AG04450 (cell line): ENCODE measurements at regions of chr3 and their contacts with region 1.

Region 1: DNA sequence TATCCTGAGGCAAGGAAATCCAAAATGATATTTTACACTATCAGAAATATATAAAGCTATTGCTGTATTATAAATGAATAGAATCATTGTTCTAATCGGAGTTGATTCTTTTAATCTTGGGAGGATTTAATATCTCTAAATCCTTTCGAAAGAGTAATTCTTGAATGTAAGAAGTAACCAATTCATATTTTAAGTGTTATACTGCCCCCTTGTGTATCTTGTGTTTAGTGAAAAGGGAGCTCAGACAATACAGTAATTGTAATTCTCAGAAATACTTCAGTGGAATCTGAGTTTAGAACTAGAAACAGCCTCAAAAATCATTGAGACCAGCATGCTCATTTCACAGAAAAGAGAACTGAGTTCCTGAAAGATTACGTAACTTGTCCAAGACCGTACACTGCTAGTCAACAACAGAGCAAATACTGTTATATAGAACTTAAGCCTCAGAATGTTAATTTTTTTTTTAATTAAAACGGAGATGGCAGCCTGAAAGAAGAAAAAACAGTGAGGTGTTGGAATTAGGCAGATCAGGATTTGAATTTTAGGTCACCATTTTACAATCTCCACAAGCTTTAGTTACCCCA is 42.9 kb downstream of the PLCH1 start:
- DNase-seq: peak; percentile 8
- H3K4me3 ChIP-seq: no peak overlapping the region
- H3K27ac ChIP-seq: no peak overlapping the region
- H3K27me3 ChIP-seq: no peaks in the 10 kb centered on the region
- CTCF ChIP-seq: peak; percentile 62

Region 2: DNA sequence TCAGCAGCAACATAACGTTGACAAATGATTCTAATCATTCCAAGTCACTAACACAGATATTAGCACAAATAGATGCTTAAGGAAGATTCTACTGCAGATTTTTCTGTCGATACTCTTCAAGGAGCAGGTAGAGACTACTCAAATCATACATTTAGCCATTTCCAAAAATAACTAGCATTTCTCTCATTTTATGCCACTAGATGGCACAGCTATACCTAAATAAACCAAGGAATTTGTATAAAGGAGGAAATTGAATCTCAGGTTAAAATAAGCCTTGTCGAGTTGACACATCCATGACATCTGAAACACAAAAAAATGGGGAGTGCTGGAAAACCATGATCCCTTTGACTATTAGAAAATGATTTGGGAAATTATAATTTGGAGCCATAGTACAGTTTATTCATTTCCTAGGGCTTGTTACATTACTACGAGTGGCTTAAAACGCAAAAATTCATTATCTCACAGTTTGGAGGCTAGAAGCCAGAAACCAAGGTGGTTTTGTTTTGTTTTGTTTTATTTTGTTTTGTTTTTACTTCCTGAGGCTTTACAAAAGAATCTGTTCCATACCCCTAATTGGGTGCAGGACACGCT is 349.0 kb before region 1 on chr3:
- CTCF ChIA-PET with region 1: interaction called, 79 read pairs
- POLR2A ChIA-PET with region 1: no interaction called
- DNase-seq: no peak
- H3K4me3 ChIP-seq: no peak overlapping the region
- H3K27ac ChIP-seq: no peak overlapping the region
- H3K27me3 ChIP-seq: no peaks in the 10 kb centered on the region
- CTCF ChIP-seq: peak; percentile 53

Region 3: DNA sequence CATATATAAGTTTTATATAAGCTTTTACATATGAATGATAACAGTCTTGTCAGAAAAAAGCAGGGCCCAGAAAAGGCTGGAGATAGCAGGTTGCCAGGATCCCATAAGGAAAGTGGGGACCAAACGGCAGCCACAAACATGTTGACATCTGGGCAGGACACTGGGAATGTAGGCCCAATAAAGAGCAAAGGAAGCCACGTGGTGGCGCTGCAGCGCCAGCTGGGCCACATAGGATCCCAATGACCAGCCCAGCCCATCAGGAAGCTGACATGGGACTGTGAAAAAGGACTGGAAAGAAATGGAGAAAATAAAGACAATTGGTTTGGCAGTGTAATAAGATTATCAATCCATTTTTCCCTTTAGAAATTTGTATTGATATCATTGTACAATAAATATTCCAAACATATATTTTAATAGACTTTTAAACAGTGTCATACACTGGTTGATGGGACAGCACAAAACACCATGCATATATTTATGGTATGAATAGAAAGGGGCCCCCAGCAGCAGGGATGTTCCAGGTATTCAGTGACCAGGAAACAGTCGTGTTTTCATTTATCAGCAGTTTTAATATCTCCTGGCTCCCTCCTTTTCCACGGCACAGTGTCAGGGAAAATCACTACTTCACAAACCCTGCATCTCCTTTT is 319.5 kb before region 1 on chr3:
- CTCF ChIA-PET with region 1: interaction called, 204 read pairs
- POLR2A ChIA-PET with region 1: no interaction called
- DNase-seq: no peak
- H3K4me3 ChIP-seq: no peak overlapping the region
- H3K27ac ChIP-seq: no peak overlapping the region
- H3K27me3 ChIP-seq: no peaks in the 10 kb centered on the region
- CTCF ChIP-seq: peak; percentile 73

Region 4: GRCh38 chr3:155391551-155391958 is 310.4 kb before region 1 on chr3:
- CTCF ChIA-PET with region 1: interaction called, 204 read pairs
- POLR2A ChIA-PET with region 1: no interaction called
- DNase-seq: no peak
- H3K4me3 ChIP-seq: no peak overlapping the region
- H3K27ac ChIP-seq: no peak overlapping the region
- H3K27me3 ChIP-seq: no peaks in the 10 kb centered on the region
- CTCF ChIP-seq: no peak

Region 5: DNA sequence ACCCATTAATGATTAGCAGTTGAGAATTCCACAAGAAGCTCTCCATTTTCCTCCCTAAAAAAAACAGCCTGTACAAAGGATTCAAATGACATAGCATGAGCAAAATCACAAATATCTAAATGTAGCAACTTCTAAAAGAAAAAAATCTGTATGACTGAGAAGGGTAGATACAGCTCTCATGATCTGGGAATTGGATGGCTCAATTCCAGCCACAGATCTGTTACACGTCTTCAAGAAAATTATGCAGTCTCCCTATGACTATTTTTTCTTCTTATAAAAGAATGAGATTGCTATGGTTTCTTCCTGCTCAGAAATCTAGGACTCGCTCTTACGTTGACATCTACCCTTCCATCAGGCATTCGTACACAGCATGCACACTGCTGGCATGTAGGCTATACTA is 28.6 kb before region 1 on chr3:
- CTCF ChIA-PET with region 1: interaction called, 12 read pairs
- POLR2A ChIA-PET with region 1: no interaction called
- DNase-seq: no peak
- H3K4me3 ChIP-seq: no peak overlapping the region
- H3K27ac ChIP-seq: no peak overlapping the region
- H3K27me3 ChIP-seq: no peaks in the 10 kb centered on the region
- CTCF ChIP-seq: no peak

Region 6: DNA sequence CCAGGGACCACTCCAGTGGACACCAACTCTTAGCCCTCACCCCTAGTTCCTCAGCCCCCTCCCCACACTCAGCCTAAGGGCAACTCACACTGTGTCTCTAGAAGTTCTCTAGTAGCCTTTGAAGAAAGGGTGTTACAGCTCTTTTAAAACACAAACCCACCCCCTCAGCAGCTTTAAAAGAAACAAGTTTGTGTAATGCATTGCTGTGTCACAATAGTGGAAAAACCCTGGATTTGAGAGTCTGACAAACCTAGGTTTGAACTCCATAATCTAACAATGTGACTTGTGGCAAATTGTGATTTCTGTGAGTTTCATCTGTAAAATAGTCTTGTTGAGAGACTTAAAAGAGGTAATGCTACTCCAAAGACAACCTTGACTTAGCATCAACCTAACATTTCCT is 11.1 kb before region 1 on chr3:
- CTCF ChIA-PET with region 1: interaction called, 11 read pairs
- POLR2A ChIA-PET with region 1: no interaction called
- DNase-seq: no peak
- H3K4me3 ChIP-seq: no peak overlapping the region
- H3K27ac ChIP-seq: no peak overlapping the region
- H3K27me3 ChIP-seq: no peaks in the 10 kb centered on the region
- CTCF ChIP-seq: no peak

Region 7: GRCh38 chr3:155712008-155712407 is 10.0 kb after region 1 on chr3:
- CTCF ChIA-PET with region 1: interaction called, 22 read pairs
- POLR2A ChIA-PET with region 1: no interaction called
- DNase-seq: no peak
- H3K4me3 ChIP-seq: no peak overlapping the region
- H3K27ac ChIP-seq: no peak overlapping the region
- H3K27me3 ChIP-seq: peaks cover 2% of the 10 kb centered on the region
- CTCF ChIP-seq: no peak